GM12878 (cell line): ENCODE measurements at regions of chr4 and their contacts with region 1.

Region 1: GRCh38 chr4:40719008-40719623 is 30.6 kb upstream of the NSUN7 start:
- DNase-seq: peak; percentile 71
- ATAC-seq: peak; percentile 88
- H3K4me3 ChIP-seq: no peak overlapping the region
- H3K27ac ChIP-seq: no peak overlapping the region
- H3K4me1 ChIP-seq: peaks cover 26% of the 10 kb centered on the region
- H3K27me3 ChIP-seq: no peaks in the 10 kb centered on the region
- CTCF ChIP-seq: peak; percentile 73 to 91 (median 87)
- EP300 ChIP-seq: no peak
- POLR2A ChIP-seq: no peak
- RAD21 ChIP-seq: peak; percentile 95

Region 2: GRCh38 chr4:40309250-40309774 is 409.8 kb before region 1 on chr4:
- CTCF ChIA-PET with region 1: interaction called, 15 read pairs
- POLR2A ChIA-PET with region 1: interaction called, 4 read pairs
- RAD21 ChIA-PET with region 1: interaction called, 14 read pairs
- SMC1A ChIA-PET with region 1: interaction called, 10 read pairs
- in situ Hi-C with region 1: no loop called
- intact Hi-C with region 1: no loop called
- DNase-seq: peak; percentile 92
- ATAC-seq: peak; percentile 65
- H3K4me3 ChIP-seq: peak overlapping the region; percentile 59
- H3K27ac ChIP-seq: peak overlapping the region; percentile 76
- H3K4me1 ChIP-seq: peaks cover 58% of the 10 kb centered on the region
- H3K27me3 ChIP-seq: no peaks in the 10 kb centered on the region
- CTCF ChIP-seq: peak; percentile 87 to 90 (median 89)
- EP300 ChIP-seq: peak; percentile 68 to 90; a peak in 3 of 4 replicates
- POLR2A ChIP-seq: peak; percentile 49
- RAD21 ChIP-seq: peak; percentile 85

Region 3: GRCh38 chr4:40432504-40432903 is 286.6 kb before region 1 on chr4:
- CTCF ChIA-PET with region 1: interaction called, 3 read pairs
- POLR2A ChIA-PET with region 1: no interaction called
- RAD21 ChIA-PET with region 1: interaction called, 3 read pairs
- SMC1A ChIA-PET with region 1: interaction called, 10 read pairs
- in situ Hi-C with region 1: no loop called
- intact Hi-C with region 1: loop called (anchors 2 kb)
- DNase-seq: no peak
- ATAC-seq: no peak
- H3K4me3 ChIP-seq: no peak overlapping the region
- H3K27ac ChIP-seq: peak overlapping the region; percentile 71
- H3K4me1 ChIP-seq: peaks cover 24% of the 10 kb centered on the region
- H3K27me3 ChIP-seq: no peaks in the 10 kb centered on the region
- CTCF ChIP-seq: no peak
- EP300 ChIP-seq: no peak
- POLR2A ChIP-seq: no peak
- RAD21 ChIP-seq: no peak

Region 4: DNA sequence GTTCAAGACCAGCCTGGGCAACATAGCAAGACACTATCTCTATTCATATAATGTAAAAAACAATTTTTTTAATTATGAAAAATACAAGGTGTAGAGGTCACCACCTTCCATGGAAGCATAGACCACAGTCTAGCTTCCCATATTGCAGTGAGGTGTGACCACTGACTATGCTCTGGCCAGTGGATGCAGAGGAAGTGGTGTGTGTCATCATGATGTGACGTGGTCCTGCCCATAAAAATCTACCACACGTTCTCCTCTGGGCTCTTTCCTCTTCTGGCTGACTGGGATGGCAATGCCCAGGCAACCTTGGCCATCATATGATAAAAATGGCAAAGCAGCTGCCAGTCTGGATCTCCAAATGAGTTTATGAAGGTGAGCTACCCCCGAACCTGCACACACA is 155.1 kb before region 1 on chr4:
- CTCF ChIA-PET with region 1: interaction called, 18 read pairs
- POLR2A ChIA-PET with region 1: interaction called, 3 read pairs
- RAD21 ChIA-PET with region 1: interaction called, 17 read pairs
- SMC1A ChIA-PET with region 1: interaction called, 12 read pairs
- in situ Hi-C with region 1: loop called (anchors 5 kb)
- intact Hi-C with region 1: no loop called
- DNase-seq: no peak
- ATAC-seq: peak; percentile 14
- H3K4me3 ChIP-seq: no peak overlapping the region
- H3K27ac ChIP-seq: peak overlapping the region; percentile 50
- H3K4me1 ChIP-seq: peaks cover 68% of the 10 kb centered on the region
- H3K27me3 ChIP-seq: no peaks in the 10 kb centered on the region
- CTCF ChIP-seq: no peak
- EP300 ChIP-seq: no peak
- POLR2A ChIP-seq: 0 out of 2 replicates have a peak, but pooled peaks have one; percentile 23
- RAD21 ChIP-seq: no peak

Region 5: GRCh38 chr4:40629401-40630334 is 89.4 kb before region 1 on chr4 and contains the start of gene RBM47:
- CTCF ChIA-PET with region 1: interaction called, 22 read pairs
- POLR2A ChIA-PET with region 1: interaction called, 3 read pairs
- RAD21 ChIA-PET with region 1: interaction called, 57 read pairs
- SMC1A ChIA-PET with region 1: interaction called, 32 read pairs
- in situ Hi-C with region 1: no loop called
- intact Hi-C with region 1: loop called (anchors 1 kb)
- DNase-seq: no peak
- ATAC-seq: peak; percentile 72
- H3K4me3 ChIP-seq: peak within 1 kb of the TSS; percentile 94
- H3K27ac ChIP-seq: peak within 1 kb of the TSS; percentile 92
- H3K4me1 ChIP-seq: peaks cover 10% of the 10 kb centered on the region
- H3K27me3 ChIP-seq: no peaks in the 10 kb centered on the region
- CTCF ChIP-seq: peak; percentile 21 to 27 (median 27); a peak in 3 of 6 replicates
- EP300 ChIP-seq: no peak
- POLR2A ChIP-seq: peak; percentile 61
- RAD21 ChIP-seq: 0 out of 2 replicates have a peak, but pooled peaks have one; percentile 2
- polyA plus RNA-seq, gene RBM47: 7.9 to 10.1 TPM

Region 6: GRCh38 chr4:40699648-40700047 is 19.5 kb before region 1 on chr4:
- CTCF ChIA-PET with region 1: interaction called, 6 read pairs
- POLR2A ChIA-PET with region 1: no interaction called
- RAD21 ChIA-PET with region 1: interaction called, 4 read pairs
- SMC1A ChIA-PET with region 1: interaction called, 11 read pairs
- in situ Hi-C with region 1: no loop called
- intact Hi-C with region 1: no loop called
- DNase-seq: no peak
- ATAC-seq: peak; percentile 21; the same call in 1 of the 3 replicates
- H3K4me3 ChIP-seq: no peak overlapping the region
- H3K27ac ChIP-seq: no peak overlapping the region
- H3K4me1 ChIP-seq: peaks cover 5% of the 10 kb centered on the region
- H3K27me3 ChIP-seq: no peaks in the 10 kb centered on the region
- CTCF ChIP-seq: no peak
- EP300 ChIP-seq: no peak
- POLR2A ChIP-seq: no peak
- RAD21 ChIP-seq: no peak

Region 7: GRCh38 chr4:41369697-41370096 is 650.6 kb after region 1 on chr4:
- CTCF ChIA-PET with region 1: no interaction called
- POLR2A ChIA-PET with region 1: no interaction called
- RAD21 ChIA-PET with region 1: no interaction called
- SMC1A ChIA-PET with region 1: no interaction called
- in situ Hi-C with region 1: no loop called
- intact Hi-C with region 1: no loop called
- DNase-seq: no peak
- ATAC-seq: no peak
- H3K4me3 ChIP-seq: no peak overlapping the region
- H3K27ac ChIP-seq: no peak overlapping the region
- H3K4me1 ChIP-seq: no peaks in the 10 kb centered on the region
- H3K27me3 ChIP-seq: no peaks in the 10 kb centered on the region; a peak in 1 of 4 replicates
- CTCF ChIP-seq: no peak
- EP300 ChIP-seq: no peak
- POLR2A ChIP-seq: no peak
- RAD21 ChIP-seq: no peak